Stomach (tissue), 19 donors: ENCODE measurements at regions of chr15 and their contacts with region 1.

Region 1: GRCh38 chr15:80776420-80777045 is 2.6 kb upstream of the CEMIP start:
- DNase-seq: peak; percentile 83 to 93
- H3K4me3 ChIP-seq: no peak overlapping the region
- H3K27ac ChIP-seq: no peak overlapping the region
- H3K4me1 ChIP-seq: peaks cover 24 to 39% (median 25%) of the 10 kb centered on the region in 4 donors
- H3K27me3 ChIP-seq: peaks cover 0 to 50% (median 27%) of the 10 kb centered on the region in 3 donors
- CTCF ChIP-seq: peak in 5 of 7 experiments; percentile 66 to 83 (median 72)
- EP300 ChIP-seq: no peak
- POLR2A ChIP-seq: no peak

Region 2: GRCh38 chr15:80436511-80437307 is 339.8 kb before region 1 on chr15:
- intact Hi-C with region 1: no loop called
- DNase-seq: peak; percentile 26 to 34
- H3K4me3 ChIP-seq: no peak overlapping the region
- H3K27ac ChIP-seq: no peak overlapping the region
- H3K4me1 ChIP-seq: peaks cover 0 to 12% (median 0%) of the 10 kb centered on the region in 4 donors
- H3K27me3 ChIP-seq: no peaks in the 10 kb centered on the region
- CTCF ChIP-seq: no peak
- EP300 ChIP-seq: no peak
- POLR2A ChIP-seq: no peak

Region 3: GRCh38 chr15:80455668-80456442 is 320.7 kb before region 1 on chr15:
- intact Hi-C with region 1: loop called (anchors 5 kb)
- DNase-seq: peak; percentile 56 to 90
- H3K4me3 ChIP-seq: no peak overlapping the region
- H3K27ac ChIP-seq: no peak overlapping the region
- H3K4me1 ChIP-seq: peaks cover under 1 to 9% (median 7%) of the 10 kb centered on the region in 4 donors
- H3K27me3 ChIP-seq: no peaks in the 10 kb centered on the region
- CTCF ChIP-seq: peak in 5 of 7 experiments; percentile 82 to 88 (median 85)
- EP300 ChIP-seq: no peak
- POLR2A ChIP-seq: no peak

Region 4: GRCh38 chr15:80967451-80967850 is 190.9 kb after region 1 on chr15:
- intact Hi-C with region 1: loop called (anchors 10 kb)
- DNase-seq: peak in 1 of 2 donors; percentile 43
- H3K4me3 ChIP-seq: no peak overlapping the region
- H3K27ac ChIP-seq: no peak overlapping the region
- H3K4me1 ChIP-seq: peaks cover 0 to 10% (median 3%) of the 10 kb centered on the region in 4 donors
- H3K27me3 ChIP-seq: no peaks in the 10 kb centered on the region
- CTCF ChIP-seq: no peak
- EP300 ChIP-seq: no peak
- POLR2A ChIP-seq: no peak